ENCODE measurements at regions of chr1 and their contacts with region 1.

Region 1: DNA sequence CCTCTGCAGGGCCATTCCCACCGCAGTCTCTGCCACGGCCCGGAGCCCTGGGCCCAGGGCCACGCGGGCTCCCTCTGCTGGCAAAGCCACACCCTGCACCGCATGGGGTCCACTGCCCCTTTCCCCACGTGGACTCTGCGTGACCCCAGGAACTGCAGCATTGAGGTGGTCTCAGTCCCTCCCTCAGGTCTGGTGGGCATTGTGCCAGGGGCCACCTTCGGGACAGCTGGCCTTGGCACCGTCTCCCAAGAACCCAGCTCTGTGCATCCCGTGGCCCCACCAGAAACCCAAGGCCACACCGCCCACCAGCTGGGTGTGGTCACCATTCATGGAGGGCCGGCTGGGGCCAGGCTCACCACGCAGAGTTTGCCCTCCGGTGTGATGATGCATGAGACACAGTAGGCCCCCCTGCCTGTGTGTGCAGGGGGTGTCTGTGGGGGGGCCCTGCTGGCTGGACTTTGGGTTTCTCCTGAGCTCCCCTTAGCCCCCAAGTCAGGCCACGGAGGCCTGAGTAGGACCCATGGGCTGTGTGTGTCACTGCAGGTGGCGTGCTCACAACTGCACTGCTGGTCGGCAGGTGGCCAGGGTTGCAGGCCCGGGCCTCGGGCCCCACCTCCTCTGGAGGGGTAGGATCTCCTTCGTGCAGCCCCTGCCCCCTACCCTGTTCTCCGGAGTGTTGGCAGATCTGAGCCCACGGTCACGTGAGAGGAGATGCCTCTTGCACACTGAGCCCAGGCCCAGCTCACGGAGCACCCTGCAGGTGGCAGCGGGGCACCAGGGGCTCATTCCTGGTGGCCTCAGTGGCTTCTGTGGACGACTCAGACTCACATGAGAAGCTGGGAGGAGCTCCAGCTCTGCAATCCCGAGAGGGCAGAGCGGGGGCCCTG is 5.8 kb downstream of the VWA1 start:
- DNase-seq: no peak
- H3K4me3 ChIP-seq: no peak overlapping the region
- H3K27me3 ChIP-seq: peaks cover 4% of the 10 kb centered on the region; the same call in 1 of the 2 replicates
- CTCF ChIP-seq: peak; percentile 92

Region 2: GRCh38 chr1:1367315-1367714 is 73.9 kb before region 1 on chr1:
- CTCF ChIA-PET with region 1: no interaction called
- POLR2A ChIA-PET with region 1: no interaction called
- DNase-seq: no peak
- H3K4me3 ChIP-seq: no peak overlapping the region
- H3K27me3 ChIP-seq: no peaks in the 10 kb centered on the region
- CTCF ChIP-seq: no peak

Region 3: DNA sequence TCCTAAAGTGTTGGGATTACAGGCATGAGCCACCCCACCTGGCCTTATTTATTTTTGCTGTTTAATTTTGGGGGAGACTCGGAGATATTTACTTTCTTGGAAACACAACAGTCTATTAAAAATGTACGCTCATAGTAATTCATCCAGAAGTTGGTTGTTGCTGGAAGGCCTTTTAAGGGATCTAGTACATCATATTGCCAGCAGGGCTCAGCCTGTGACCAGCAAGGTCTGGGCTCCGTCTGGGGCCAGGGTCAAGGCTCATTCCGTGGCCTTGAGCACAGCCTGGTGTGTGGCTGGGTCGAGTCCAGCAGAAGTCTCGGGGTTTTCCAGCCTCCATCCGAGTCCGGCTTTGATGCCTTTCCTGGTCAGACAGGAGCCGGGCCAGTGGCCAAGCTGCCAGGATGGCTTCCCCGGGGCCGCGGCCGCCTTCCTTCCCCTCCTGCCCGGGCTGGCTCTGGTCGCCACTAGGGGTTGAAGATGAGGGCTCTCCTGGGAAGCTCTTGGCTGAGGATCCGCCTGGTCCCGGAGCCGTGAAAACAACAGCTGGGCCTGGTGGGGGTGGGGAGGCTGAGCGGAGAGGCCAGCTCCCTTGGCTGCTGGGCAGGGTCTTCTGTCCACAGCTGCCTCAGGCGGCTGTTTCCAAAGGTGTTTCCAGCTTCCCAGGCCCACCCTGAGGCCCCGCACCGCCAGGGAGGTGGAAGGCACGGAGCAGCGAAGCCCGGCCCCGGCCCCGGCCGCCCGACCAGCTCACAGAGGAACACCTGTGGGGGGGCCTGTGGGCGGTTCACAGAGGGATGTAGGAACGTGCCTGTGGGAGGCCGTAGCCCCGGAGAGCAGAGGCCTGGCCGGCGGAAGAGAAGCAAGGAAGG is 10.9 kb before region 1 on chr1:
- CTCF ChIA-PET with region 1: interaction called, 24 read pairs
- POLR2A ChIA-PET with region 1: no interaction called
- DNase-seq: no peak
- H3K4me3 ChIP-seq: no peak overlapping the region
- H3K27me3 ChIP-seq: no peaks in the 10 kb centered on the region
- CTCF ChIP-seq: peak; percentile 35

Region 4: DNA sequence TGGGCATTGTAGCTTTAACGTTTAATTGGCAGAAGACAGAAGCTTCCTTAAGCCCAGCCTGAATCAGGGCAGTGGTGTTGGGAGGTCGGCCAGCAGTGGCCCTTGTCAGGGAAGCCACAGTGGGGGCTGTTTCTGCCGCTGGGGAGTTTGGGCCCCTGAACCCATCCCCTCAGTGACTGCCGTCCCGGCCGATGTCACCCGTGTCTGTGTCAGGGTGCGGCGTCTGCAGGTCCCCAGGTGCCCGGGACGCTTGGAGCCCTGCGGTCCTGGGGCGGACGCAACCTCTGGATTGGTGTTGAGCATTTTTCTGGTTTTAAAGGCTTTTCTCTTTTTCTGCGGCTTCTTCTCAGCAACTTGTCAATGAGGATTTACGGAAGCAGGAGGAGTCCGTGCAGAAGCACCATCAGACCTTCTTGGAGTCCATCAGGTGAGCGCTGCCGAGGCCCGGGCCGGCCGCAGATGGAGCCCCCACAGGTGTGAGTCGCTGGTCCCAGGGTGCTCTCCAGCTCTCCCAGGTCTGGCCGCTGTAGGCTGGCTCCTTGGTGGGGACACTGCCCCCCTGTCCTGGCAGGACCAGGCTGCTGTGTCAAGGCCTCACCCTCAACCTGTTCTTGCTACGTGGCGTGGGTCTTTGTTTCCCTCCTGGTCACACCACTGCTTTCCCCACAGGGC is 10.6 kb after region 1 on chr1:
- CTCF ChIA-PET with region 1: interaction called, 25 read pairs
- POLR2A ChIA-PET with region 1: no interaction called
- DNase-seq: no peak
- H3K4me3 ChIP-seq: no peak overlapping the region
- H3K27me3 ChIP-seq: no peaks in the 10 kb centered on the region; the same call in 1 of the 2 replicates
- CTCF ChIP-seq: no peak

Region 5: DNA sequence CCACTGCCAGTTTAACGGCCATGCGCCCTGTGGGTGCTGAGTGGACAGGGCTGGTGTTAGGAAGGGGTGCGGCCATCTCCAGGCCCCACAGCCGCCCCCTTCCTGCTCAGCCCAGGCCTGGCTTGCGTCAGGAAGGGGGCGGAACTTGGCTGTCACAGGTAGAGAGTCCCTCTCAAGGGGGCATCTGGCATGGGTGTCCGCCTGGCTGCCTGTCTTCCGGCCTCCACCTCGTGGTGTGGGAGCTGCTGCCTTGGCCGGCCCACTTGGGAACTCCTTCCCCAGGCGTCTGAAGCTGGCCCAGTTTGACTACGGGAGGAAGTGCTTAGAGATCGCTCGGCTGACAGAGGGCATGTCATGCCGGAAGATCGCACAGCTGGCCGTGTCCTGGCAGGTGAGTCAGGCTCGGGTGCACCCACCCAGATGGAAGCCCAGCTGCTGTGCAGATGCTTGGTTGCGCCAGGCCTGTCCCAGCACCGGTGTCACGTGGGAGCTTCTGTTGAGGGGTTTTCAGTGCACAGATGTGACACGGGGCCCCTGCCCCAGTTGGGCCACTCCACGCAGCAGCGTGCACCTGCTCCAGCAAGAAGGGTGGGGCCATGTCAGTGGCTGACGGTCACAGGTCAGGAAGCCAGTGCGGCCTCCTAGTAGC is 21.2 kb after region 1 on chr1:
- CTCF ChIA-PET with region 1: interaction called, 13 read pairs
- POLR2A ChIA-PET with region 1: no interaction called
- DNase-seq: peak; percentile 3
- H3K4me3 ChIP-seq: no peak overlapping the region
- H3K27me3 ChIP-seq: no peaks in the 10 kb centered on the region
- CTCF ChIP-seq: no peak

Region 6: DNA sequence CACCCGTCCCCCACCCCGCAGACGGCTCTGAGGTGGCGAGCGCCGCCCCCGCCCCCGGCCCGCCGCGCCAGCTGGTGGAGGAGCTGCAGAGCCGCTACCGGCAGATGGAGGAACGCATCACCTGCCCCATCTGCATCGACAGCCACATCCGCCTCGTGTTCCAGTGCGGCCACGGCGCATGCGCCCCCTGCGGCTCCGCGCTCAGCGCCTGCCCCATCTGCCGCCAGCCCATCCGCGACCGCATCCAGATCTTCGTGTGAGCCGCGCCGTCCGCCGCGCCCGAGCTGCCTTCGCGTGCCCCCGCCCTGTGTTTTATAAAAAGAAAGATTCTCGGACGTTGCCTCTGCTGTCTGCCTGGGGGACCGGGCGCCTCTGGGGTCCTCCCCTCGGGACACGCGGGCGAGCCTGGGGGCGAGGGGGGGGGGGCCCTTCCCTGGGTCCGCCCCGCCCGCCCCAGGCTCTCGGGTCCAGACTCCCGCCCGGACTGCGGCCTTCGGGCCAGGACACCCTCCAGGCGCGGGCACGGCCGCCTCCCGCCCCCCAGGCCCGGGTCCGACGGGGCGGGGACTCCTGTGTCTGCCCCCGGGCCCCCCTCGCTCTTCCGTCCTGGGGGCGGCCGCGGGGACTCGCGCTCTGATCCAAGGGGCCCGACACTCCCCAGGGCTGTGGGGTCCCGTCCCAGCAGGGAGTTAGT is 189.2 kb after region 1 on chr1:
- CTCF ChIA-PET with region 1: no interaction called
- POLR2A ChIA-PET with region 1: no interaction called
- DNase-seq: no peak
- H3K4me3 ChIP-seq: no peak overlapping the region
- H3K27me3 ChIP-seq: peaks cover 2% of the 10 kb centered on the region
- CTCF ChIP-seq: no peak

Measured in BJ (cell line).